ENCODE measurements at regions of chr4 and their contacts with region 1.

Region 1: GRCh38 chr4:149781150-149781549 is 34.5 kb downstream of the IQCM start:
- DNase-seq: no peak
- H3K4me3 ChIP-seq: no peak overlapping the region
- H3K27ac ChIP-seq: no peak overlapping the region
- H3K4me1 ChIP-seq: no peaks in the 10 kb centered on the region
- H3K27me3 ChIP-seq: no peaks in the 10 kb centered on the region
- CTCF ChIP-seq: no peak
- EP300 ChIP-seq: no peak
- POLR2A ChIP-seq: no peak

Region 2: GRCh38 chr4:149605601-149606378 is 175.4 kb before region 1 on chr4:
- in situ Hi-C with region 1: no loop called
- intact Hi-C with region 1: no loop called
- DNase-seq: no peak
- H3K4me3 ChIP-seq: no peak overlapping the region
- H3K27ac ChIP-seq: no peak overlapping the region
- H3K4me1 ChIP-seq: no peaks in the 10 kb centered on the region
- H3K27me3 ChIP-seq: no peaks in the 10 kb centered on the region
- CTCF ChIP-seq: no peak
- EP300 ChIP-seq: no peak
- POLR2A ChIP-seq: no peak

Region 3: DNA sequence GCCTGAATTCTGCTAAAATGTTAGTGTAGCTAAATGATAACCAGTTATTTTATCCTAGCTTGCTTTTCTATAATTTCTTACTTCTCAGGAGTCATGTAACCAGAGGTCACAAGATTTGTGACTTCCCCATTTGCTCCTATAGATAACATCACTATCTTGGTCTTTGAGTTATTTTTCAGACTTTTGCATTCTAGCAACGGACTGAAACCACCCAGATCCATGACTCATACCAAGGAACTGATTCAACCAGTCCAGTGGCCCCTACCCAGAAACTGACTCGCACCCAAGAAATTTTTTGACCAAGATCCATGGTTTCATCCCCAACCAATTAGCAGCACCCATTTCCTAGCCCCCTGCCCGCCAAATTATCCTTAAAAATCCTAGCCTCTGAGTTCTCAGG is 15.5 kb before region 1 on chr4:
- in situ Hi-C with region 1: no loop called
- intact Hi-C with region 1: loop called (anchors 2 kb)
- DNase-seq: no peak
- H3K4me3 ChIP-seq: no peak overlapping the region
- H3K27ac ChIP-seq: no peak overlapping the region
- H3K4me1 ChIP-seq: no peaks in the 10 kb centered on the region
- H3K27me3 ChIP-seq: no peaks in the 10 kb centered on the region
- CTCF ChIP-seq: no peak
- EP300 ChIP-seq: no peak
- POLR2A ChIP-seq: no peak

Measured in transverse colon (tissue), 4 donors.